ENCODE measurements at regions of chr1 and their contacts with region 1.

Region 1: DNA sequence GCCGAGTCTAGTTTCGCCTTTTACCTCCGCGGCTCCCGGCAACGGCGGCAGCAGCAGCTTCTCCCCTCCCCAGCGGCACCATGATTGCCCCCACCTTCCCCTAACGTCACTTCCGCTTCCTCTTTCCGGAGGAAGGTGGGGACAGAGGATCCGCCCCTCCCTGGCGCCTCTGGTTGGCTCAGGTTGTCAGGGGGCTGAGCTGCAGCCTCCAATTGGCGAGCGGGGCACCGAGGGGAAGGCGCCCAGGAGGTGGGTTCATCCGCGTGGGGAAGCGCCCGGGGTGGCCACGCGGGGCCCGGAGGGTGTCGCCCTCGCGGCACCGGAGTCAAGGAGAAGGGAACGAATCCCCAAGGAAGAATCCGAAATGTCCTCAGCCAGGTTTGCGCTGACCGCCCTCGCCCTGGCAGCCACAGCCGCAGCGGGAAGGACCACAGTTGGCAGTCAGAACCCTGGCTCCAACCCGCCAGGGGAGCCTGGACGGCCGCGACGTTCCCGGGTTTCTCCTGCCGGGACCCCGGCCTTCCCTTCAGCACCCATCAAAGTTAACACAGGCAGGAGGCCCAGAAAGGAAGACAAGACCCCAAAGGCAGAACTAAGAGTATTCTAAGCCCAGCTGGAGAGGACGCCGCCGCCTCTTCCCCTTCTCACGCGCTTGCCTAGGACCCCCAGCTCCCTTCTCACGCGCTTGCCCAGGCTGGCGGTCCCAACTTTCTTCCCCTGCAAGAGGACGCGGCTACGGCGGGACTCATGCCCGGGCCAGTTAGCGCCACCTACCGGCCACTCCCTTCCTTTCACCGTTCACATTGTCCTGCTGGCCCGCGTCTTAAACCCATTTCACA is at the start of gene MTF1:
- DNase-seq: peak; percentile 98 to 99 (median 98)
- ATAC-seq: peak; percentile 99 to 100
- H3K4me3 ChIP-seq: peak within 1 kb of the TSS; percentile 92
- H3K27ac ChIP-seq: peak within 1 kb of the TSS; percentile 91
- H3K4me1 ChIP-seq: no peaks in the 10 kb centered on the region
- H3K27me3 ChIP-seq: no peaks in the 10 kb centered on the region
- total RNA-seq, gene MTF1: 8.9 to 13.4 (median 11.0) TPM

Region 2: GRCh38 chr1:37811027-37811655 is 48.6 kb before region 1 on chr1:
- intact Hi-C with region 1: loop called in 1 of 4 experiments (anchors 5 kb)
- DNase-seq: peak; percentile 58 to 79 (median 73)
- ATAC-seq: no peak
- H3K4me3 ChIP-seq: no peak overlapping the region
- H3K27ac ChIP-seq: no peak overlapping the region
- H3K4me1 ChIP-seq: peaks cover 8% of the 10 kb centered on the region
- H3K27me3 ChIP-seq: no peaks in the 10 kb centered on the region